ENCODE measurements at regions of chr5 and their contacts with region 1.

Region 1: DNA sequence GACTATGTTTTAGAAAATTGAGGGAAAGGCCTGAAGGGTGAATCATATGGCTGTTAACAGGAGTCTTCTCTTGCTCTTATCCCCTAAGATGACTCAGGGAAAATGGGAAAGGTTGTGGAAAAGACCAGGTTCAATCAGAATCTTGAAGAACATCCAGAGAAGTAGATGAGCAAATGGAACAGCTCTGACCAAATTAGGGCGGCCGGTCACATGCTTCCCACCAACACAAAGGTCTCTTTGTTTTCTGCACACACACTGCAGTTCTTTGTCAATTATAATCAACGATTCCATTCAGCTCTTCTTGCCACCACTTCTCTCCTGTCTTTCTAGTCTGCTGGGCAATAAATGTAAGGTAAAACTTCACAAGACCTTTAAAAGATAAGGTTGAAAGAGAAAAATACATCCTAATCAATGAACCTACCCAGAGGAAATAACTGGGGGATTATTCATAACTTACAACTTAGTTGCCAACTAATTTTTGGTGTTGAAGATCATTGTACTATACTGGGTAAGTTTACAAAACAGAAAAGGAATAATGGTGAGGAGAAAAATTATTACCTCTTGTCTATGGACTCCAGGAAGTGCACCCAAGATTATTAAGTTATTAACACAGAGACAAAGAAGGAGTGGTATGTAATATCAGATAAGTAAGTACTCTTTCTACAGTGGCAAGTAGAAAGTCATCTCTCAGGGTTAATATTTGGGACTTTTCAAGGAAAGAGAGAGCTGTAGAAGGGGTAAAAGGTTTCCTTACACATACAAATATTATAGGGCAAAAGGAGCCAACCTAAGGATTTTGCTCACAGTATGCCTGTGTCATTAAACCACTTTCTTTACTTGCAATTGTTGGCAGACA is 441.9 kb upstream of the PIK3R1 start:
- DNase-seq: peak; percentile 75
- H3K4me3 Mint-ChIP-seq: peak overlapping the region; percentile 49
- H3K27ac Mint-ChIP-seq: peak overlapping the region; percentile 100
- H3K4me1 Mint-ChIP-seq: peaks cover 67% of the 10 kb centered on the region
- H3K27me3 Mint-ChIP-seq: no peaks in the 10 kb centered on the region
- CTCF ChIP-seq: no peak

Region 2: DNA sequence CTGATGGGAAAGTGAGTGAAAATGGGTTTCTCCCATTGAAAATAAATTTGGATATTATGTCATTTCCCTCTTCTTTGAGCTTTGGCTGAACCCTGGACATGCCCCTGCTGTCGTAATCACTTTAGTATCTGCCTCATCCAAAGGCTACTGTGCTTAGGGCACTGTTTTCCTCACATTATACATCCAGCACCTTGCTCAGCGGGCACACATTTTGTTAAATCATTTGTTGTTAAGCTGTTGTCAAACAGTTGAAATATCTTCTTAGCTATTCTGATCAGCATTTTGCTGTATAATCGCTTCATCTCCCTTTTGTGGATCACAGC is 224.4 kb before region 1 on chr5:
- CTCF ChIA-PET with region 1: no interaction called
- intact Hi-C with region 1: loop called (anchors 5 kb)
- DNase-seq: no peak
- H3K4me3 Mint-ChIP-seq: no peak overlapping the region
- H3K27ac Mint-ChIP-seq: peak overlapping the region; percentile 37
- H3K4me1 Mint-ChIP-seq: peaks cover 42% of the 10 kb centered on the region
- H3K27me3 Mint-ChIP-seq: no peaks in the 10 kb centered on the region
- CTCF ChIP-seq: no peak

Region 3: GRCh38 chr5:67581203-67581602 is 192.4 kb before region 1 on chr5:
- CTCF ChIA-PET with region 1: no interaction called
- intact Hi-C with region 1: no loop called
- DNase-seq: no peak
- H3K4me3 Mint-ChIP-seq: no peak overlapping the region
- H3K27ac Mint-ChIP-seq: no peak overlapping the region
- H3K4me1 Mint-ChIP-seq: peaks cover 18% of the 10 kb centered on the region
- H3K27me3 Mint-ChIP-seq: no peaks in the 10 kb centered on the region
- CTCF ChIP-seq: no peak

Region 4: DNA sequence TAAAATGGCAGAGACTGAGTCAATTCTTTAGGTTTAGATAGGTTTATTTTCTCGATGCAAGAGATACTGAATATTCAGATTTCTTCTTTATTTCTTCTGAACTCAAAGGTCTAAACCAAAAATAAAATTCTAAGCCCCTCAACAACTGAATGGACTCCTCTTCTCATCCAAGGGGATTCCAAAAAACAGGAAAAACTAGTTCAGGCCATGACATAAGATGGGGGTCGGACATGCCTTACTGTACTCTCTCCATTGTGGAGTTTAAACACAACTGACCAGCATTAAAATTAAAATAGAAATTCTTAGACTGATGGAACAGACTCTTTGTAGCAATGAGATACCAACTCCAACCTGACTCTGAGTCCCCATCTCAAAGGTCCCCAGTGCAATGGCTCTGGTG is 14.9 kb after region 1 on chr5:
- CTCF ChIA-PET with region 1: no interaction called
- intact Hi-C with region 1: no loop called
- DNase-seq: no peak
- H3K4me3 Mint-ChIP-seq: no peak overlapping the region
- H3K27ac Mint-ChIP-seq: no peak overlapping the region
- H3K4me1 Mint-ChIP-seq: peaks cover 10% of the 10 kb centered on the region
- H3K27me3 Mint-ChIP-seq: no peaks in the 10 kb centered on the region
- CTCF ChIP-seq: no peak

Region 5: DNA sequence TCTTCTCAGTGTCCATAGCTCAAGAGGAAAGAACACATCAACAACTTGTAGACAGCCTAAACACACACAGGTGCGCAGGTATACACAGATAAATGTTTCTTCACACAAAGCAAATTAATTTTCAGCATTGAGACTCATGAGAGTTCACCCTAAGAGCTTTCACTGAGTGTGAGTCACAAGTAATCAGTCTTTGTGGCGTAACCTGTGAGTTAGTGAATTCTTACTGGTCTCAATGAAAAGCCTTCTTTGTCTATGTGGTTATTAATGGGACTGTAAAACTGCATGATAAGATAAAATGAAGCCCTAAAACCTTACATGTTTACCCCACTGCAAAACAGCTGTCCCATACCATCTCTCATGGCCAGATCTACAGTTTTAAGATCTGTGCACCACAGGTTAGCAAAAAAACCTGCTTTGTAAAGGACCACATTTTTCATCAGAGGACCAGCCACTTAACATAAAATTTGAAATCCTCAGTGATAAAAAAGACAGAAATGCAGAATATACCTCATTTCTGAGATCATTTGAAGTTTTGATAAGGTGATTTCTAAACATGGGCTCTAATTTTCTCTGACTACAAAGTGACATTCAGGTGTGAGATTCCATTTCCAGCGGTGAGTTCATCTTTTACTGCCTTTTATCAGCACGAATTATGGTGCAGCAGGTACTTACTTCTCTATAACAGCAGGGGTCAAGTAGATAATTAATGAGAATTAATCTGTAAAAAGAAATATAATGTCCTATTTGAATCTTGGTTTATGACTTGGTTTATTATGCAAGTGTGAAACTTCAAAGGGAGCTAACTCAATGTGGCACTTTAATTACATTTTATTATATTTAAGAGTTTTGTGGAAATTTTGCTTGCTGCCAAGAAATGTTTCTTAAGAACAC is 106.2 kb after region 1 on chr5:
- CTCF ChIA-PET with region 1: no interaction called
- intact Hi-C with region 1: loop called (anchors 5 kb)
- DNase-seq: peak; percentile 24
- H3K4me3 Mint-ChIP-seq: peak overlapping the region; percentile 13
- H3K27ac Mint-ChIP-seq: peak overlapping the region; percentile 70
- H3K4me1 Mint-ChIP-seq: peaks cover 21% of the 10 kb centered on the region
- H3K27me3 Mint-ChIP-seq: no peaks in the 10 kb centered on the region
- CTCF ChIP-seq: no peak

Region 6: DNA sequence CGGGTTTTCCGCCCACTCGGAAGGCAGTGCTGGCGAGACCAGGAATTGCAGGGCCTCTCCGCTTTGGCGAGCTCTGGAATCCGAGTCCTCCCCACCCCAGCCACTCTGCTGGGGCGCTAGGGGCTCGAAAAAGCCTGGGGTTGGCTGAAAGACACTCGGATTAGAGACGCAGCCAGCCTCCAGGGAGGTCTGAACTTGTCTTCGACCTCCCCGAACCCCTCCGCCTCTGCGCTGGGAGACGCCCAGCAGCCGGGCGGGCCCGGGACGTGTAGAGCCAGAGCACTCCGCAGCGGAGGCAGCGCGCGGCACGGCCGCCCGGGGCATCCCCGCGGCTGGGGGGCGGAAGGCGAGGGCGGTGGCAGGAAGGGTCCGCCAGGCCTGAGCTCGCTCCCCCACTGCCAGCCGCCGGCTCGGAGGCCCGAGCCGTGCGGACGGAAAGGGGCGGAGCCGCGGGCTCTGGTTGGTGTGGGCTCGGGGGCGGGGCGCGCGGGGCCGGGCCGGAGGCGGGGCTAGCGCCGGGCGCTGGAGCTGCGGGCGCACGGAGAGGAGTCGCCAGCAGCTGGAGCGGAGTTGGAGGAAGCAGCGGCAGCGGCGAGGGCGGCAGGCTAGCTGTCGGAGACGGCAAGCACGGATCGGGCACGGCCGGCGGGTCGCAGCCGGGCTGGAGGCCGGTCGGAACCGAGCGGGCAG is 441.7 kb after region 1 on chr5 and contains the start of gene PIK3R1:
- CTCF ChIA-PET with region 1: interaction called, 4 read pairs
- intact Hi-C with region 1: loop called (anchors 5 kb)
- DNase-seq: peak; percentile 97
- H3K4me3 Mint-ChIP-seq: peak within 1 kb of the TSS; percentile 84
- H3K27ac Mint-ChIP-seq: peak within 1 kb of the TSS; percentile 77
- H3K4me1 Mint-ChIP-seq: peaks cover 25% of the 10 kb centered on the region
- H3K27me3 Mint-ChIP-seq: no peaks in the 10 kb centered on the region
- CTCF ChIP-seq: no peak
- total RNA-seq, gene PIK3R1: 74.8 and 81.5 TPM in 2 replicates

Region 7: GRCh38 chr5:68396722-68397121 is 623.1 kb after region 1 on chr5:
- CTCF ChIA-PET with region 1: no interaction called
- intact Hi-C with region 1: loop called (anchors 5 kb)
- DNase-seq: peak; percentile 80
- H3K4me3 Mint-ChIP-seq: peak overlapping the region; percentile 61
- H3K27ac Mint-ChIP-seq: peak overlapping the region; percentile 92
- H3K4me1 Mint-ChIP-seq: peaks cover 28% of the 10 kb centered on the region
- H3K27me3 Mint-ChIP-seq: no peaks in the 10 kb centered on the region
- CTCF ChIP-seq: no peak

Measured in Calu3 (cell line).